ENCODE measurements at regions of chr17 and their contacts with region 1.

Region 1: DNA sequence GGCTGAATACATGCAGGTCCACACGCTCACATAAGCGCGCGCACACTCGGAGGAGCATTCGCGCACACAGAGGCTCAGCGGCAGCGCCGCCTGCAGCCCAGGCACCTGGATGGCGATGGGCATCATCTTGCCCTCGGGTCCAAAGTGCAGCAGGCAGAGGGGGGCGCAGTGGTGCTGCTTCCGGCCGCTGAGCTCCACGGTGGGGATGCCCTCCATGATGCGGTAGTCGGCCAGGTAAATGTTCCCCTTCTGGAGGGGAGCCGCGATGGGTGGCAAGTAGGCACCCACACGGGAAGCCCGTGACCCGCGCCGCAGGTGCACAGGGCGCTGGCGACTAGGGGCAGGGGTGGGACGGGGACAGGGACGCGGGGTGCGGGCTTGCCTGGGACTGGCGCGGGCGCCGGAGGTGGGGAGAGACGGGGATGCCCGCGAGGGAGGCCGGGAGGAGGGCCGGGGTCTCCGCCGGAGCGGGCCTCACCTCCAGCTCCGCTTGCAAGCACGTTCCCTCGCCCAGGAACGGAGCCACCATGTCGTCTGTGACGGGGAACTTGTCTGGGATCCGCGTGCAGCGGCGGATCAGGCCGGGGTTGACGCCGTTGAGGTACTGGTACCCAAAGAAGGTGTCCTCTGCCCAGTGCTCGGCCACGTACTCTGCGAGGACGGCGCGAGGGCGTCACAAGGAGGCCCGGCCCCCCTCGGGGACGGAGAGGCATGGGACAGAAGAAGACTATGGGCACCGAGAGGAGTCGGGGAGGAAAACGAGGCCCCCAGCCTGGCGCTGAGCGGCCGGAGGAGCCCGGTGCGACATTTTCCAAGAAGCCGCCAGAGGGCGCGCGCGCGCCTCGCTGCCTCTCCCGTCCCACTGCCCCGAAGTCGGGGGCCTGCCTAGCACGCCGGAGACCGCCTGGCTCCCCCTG is 8.0 kb downstream of the ALOX12B start:
- DNase-seq: no peak
- H3K4me3 ChIP-seq: peak overlapping the region; percentile 23 to 28
- H3K27ac ChIP-seq: peak overlapping the region; percentile 22 to 56
- H3K4me1 ChIP-seq: no peaks in the 10 kb centered on the region
- H3K27me3 ChIP-seq: no peaks in the 10 kb centered on the region
- CTCF ChIP-seq: peak; percentile 77 to 89 (median 82)
- POLR2A ChIP-seq: no peak

Region 2: GRCh38 chr17:7803981-7804380 is 275.6 kb before region 1 on chr17:
- intact Hi-C with region 1: no loop called
- DNase-seq: peak; percentile 32
- H3K4me3 ChIP-seq: no peak overlapping the region
- H3K27ac ChIP-seq: no peak overlapping the region
- H3K4me1 ChIP-seq: no peaks in the 10 kb centered on the region
- H3K27me3 ChIP-seq: no peaks in the 10 kb centered on the region
- CTCF ChIP-seq: no peak
- POLR2A ChIP-seq: no peak

Region 3: DNA sequence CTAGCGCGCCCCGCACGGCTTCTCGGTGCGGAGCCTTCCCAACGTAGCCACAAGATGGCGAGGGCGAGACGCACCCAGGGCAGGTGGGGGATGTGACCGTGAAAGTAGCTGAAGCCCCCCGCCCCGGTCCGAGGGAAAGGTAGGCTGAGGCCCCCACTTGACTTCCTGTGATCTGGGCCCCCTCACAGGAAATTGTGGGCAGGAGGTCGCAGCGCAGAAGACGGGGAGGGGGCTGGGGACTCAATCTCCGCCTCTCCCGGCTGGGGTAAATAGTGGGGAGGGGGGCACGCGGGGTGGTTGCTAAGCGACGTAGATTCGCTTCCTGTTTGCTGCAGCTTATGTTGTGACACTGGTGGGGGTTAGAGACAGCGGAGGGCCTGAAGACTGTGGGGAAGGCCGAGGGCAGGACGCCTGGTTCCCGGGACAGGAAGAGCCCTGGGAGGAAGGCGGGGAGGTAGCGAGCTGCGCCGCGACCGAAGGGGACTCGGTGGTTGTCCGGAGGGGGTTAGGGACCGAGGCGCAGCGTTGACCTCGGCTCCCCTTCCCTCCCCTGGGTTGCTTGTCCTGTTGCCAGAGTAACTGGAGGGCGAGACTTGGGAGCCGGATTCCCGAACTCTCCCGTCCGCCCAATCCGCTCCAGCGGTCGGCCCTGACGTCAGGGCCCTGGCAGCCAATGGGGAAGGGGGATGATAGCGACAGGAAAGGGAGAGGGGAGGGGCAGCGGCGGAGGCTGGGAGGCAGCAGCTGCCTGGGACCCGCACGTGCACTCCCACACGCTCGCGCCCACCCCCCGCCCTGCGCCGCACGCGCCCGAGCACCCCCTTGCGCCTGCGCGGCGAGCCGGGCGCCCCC is 244.4 kb before region 1 on chr17:
- intact Hi-C with region 1: no loop called
- DNase-seq: peak; percentile 97
- H3K4me3 ChIP-seq: peak overlapping the region; percentile 75 to 83
- H3K27ac ChIP-seq: peak overlapping the region; percentile 95 to 98
- H3K4me1 ChIP-seq: peaks cover 22% of the 10 kb centered on the region
- H3K27me3 ChIP-seq: no peaks in the 10 kb centered on the region
- CTCF ChIP-seq: peak; percentile 67 to 95 (median 86)
- POLR2A ChIP-seq: peak; percentile 87

Region 4: GRCh38 chr17:8300627-8301242 is 221.2 kb after region 1 on chr17:
- intact Hi-C with region 1: loop called (anchors 10 kb)
- DNase-seq: peak; percentile 58
- H3K4me3 ChIP-seq: no peak overlapping the region
- H3K27ac ChIP-seq: no peak overlapping the region
- H3K4me1 ChIP-seq: no peaks in the 10 kb centered on the region
- H3K27me3 ChIP-seq: no peaks in the 10 kb centered on the region
- CTCF ChIP-seq: peak; percentile 73 to 89 (median 85)
- POLR2A ChIP-seq: no peak

Measured in prostate gland (tissue), 2 donors.